ENCODE measurements at regions of chr18 and their contacts with region 1.

Region 1: DNA sequence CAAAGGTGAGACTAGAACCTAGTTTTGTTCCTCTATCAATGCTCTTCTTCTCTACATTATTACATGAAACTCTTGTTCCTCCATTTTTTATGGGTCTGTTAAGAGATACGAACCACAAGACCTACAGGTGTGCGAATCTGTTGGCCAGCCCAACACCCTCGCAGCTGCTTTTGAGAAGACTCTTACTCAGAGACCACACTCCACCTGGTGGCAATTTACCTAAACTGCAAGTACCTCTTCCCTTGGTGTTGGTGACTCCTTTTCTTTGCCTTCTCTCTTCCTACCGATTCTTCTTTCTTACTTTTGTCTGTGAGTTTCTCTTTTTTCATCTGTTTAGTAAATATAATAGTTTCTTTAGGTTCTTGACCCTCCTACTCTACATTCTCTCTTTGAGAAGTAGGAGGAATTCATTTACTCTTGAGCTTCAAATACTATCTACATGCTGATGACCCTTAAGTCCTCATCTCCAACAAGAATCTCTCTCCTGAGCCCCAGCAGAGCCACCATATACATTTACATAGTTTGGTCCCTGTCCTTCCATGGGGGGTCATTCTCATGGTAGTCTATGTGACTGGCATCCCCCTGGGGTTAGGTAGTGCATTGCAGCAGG is 81.8 kb upstream of the GAREM1 start:
- DNase-seq: no peak
- ATAC-seq: peak; percentile 68

Region 2: GRCh38 chr18:32271672-32272208 is 280.8 kb before region 1 on chr18:
- intact Hi-C with region 1: loop called (anchors 5 kb)
- DNase-seq: no peak
- ATAC-seq: peak; percentile 67

Measured in Right ventricle myocardium inferior (tissue), 1 donor.